ENCODE measurements at regions of chr6 and their contacts with region 1.

Region 1: GRCh38 chr6:32763427-32763826 is at the start of gene HLA-DQB2:
- DNase-seq: no peak
- H3K4me3 ChIP-seq: no peak within 1 kb of the TSS
- H3K27ac ChIP-seq: no peak within 1 kb of the TSS
- H3K4me1 ChIP-seq: no peaks in the 10 kb centered on the region
- H3K27me3 ChIP-seq: peaks cover 34% of the 10 kb centered on the region
- CTCF ChIP-seq: no peak
- total RNA-seq, gene HLA-DQB2: not detected in 2 replicates

Region 2: DNA sequence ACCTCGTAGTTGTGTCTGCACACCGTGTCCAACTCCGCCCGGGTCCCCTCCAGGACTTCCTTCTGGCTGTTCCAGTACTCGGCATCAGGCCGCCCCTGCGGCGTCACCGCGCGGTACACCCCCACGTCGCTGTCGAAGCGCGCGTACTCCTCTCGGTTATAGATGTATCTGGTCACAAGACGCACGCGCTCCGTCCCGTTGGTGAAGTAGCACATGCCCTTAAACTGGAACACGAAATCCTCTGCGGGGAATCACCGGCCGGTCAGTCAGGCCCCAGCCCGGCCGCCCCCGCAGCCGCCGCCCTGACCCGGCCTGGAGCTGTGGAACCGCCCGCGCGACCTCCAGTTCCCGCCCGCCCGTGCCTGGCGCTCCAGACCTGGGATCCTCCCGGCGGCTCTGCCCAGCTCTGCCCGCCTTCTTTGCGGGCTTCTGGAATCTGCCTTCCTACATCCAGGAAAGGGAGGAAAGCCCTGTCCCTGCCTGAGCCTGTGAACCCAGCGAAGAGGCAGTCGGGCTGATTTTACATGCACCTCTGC is 98.5 kb before region 1 on chr6:
- CTCF ChIA-PET with region 1: interaction called, 4 read pairs
- POLR2A ChIA-PET with region 1: no interaction called
- intact Hi-C with region 1: loop called (anchors 5 kb)
- DNase-seq: peak; percentile 26
- H3K4me3 ChIP-seq: no peak overlapping the region
- H3K27ac ChIP-seq: no peak overlapping the region
- H3K4me1 ChIP-seq: no peaks in the 10 kb centered on the region
- H3K27me3 ChIP-seq: peaks cover 47% of the 10 kb centered on the region
- CTCF ChIP-seq: no peak

Region 3: DNA sequence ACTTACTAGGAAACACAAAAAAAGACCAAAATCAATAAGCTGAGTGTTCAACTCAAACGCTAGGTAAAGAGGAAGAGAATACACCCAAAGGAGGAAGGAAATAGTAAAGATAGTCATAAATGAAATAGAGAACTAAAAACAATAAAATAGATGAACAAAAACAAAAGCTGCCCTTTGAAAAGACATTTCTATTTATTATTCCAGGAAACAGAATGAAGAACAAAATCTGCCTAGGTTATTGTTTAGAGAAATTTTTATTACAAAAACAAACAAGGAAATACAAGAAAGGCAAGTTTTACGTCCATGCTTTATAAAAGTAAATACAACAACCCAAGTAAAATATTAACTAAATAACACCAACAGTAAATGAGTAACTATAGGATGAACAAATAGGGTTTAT is 157.3 kb after region 1 on chr6:
- CTCF ChIA-PET with region 1: no interaction called
- POLR2A ChIA-PET with region 1: no interaction called
- intact Hi-C with region 1: no loop called
- DNase-seq: no peak
- H3K4me3 ChIP-seq: no peak overlapping the region
- H3K27ac ChIP-seq: no peak overlapping the region
- H3K4me1 ChIP-seq: no peaks in the 10 kb centered on the region
- H3K27me3 ChIP-seq: peaks cover 26% of the 10 kb centered on the region
- CTCF ChIP-seq: no peak